Esophagus muscularis mucosa (tissue), 4 donors: ENCODE measurements at regions of chr19 and their contacts with region 1.

Region 1: DNA sequence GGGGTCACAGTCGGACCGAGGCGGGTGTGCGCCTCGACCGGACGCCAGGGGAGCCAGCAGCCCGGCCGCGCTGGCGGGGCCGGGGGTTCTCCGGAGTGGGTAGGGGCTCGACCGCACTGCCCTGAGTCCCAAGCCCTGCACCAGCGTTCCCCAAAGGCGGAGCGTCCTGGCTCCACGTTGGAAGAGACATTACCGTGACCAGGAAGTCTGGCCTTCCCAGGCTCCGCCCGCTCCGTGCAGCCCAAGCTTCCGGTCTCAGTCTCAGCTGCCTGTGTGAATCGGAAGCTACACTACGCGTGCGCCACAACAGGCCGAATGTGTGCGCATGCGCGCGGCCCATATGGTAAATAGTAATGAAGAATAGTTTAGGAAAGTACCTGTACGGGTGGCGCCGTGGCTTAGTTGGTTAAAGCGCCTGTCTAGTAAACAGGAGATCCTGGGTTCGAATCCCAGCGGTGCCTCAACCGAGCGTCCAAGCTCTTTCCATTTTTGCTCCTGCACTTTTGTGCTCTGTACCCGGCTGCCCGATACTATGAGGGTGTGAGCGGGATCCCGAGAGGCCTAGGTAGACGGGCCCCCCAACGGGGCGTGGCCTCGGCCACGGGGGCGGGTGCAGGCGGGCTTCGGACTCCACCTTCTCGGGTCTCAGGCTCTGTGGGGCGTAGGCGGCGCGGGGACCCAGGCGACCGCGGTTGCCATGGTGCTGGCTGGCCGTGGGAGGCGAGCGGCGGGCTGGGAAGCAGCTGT is 17.3 kb upstream of the LRP3 start:
- DNase-seq: peak; percentile 100
- H3K4me3 ChIP-seq: peak overlapping the region; percentile 70 to 96 (median 82)
- H3K27ac ChIP-seq: peak overlapping the region; percentile 88 to 96 (median 92)
- H3K4me1 ChIP-seq: peaks cover 24 to 46% (median 32%) of the 10 kb centered on the region in 4 donors
- H3K27me3 ChIP-seq: no peaks in the 10 kb centered on the region
- CTCF ChIP-seq: peak in 2 of 3 experiments; percentile 4 to 44
- EP300 ChIP-seq: no peak
- POLR2A ChIP-seq: peak; percentile 29

Region 2: DNA sequence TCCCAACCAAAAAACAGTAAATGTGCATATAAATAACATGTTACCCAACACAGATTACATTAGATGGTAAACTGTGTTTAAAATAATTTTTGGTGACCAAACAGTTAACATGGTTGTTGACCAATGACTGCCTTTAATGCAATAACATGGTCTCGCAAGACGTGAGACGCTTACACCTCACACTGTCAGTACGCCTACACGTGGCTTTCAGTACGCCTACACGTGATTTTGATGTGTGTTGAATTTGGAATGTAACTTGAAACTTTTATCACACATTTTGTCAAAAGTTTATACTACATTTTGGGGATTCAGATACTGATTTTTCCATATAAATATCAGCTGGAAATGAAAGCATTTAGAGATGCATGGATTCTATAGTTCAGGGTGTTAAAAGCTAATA is 339.3 kb before region 1 on chr19:
- intact Hi-C with region 1: no loop called
- DNase-seq: no peak
- H3K4me3 ChIP-seq: no peak overlapping the region
- H3K27ac ChIP-seq: no peak overlapping the region
- H3K4me1 ChIP-seq: peaks cover 0 to 6% (median 2%) of the 10 kb centered on the region in 4 donors
- H3K27me3 ChIP-seq: no peaks in the 10 kb centered on the region
- CTCF ChIP-seq: no peak
- EP300 ChIP-seq: no peak
- POLR2A ChIP-seq: no peak

Region 3: GRCh38 chr19:33143897-33144405 is 32.9 kb before region 1 on chr19:
- intact Hi-C with region 1: loop called (anchors 5 kb)
- DNase-seq: no peak
- H3K4me3 ChIP-seq: no peak overlapping the region
- H3K27ac ChIP-seq: no peak overlapping the region
- H3K4me1 ChIP-seq: peaks cover 0 to 8% (median 6%) of the 10 kb centered on the region in 4 donors
- H3K27me3 ChIP-seq: peaks cover 0 to 15% (median 0%) of the 10 kb centered on the region in 4 donors
- CTCF ChIP-seq: peak in 2 of 3 experiments; percentile 91 to 92
- EP300 ChIP-seq: no peak
- POLR2A ChIP-seq: no peak

Region 4: GRCh38 chr19:33373701-33374421 is 197.0 kb after region 1 on chr19 and contains the start of gene CEBPG:
- intact Hi-C with region 1: loop called (anchors 5 kb)
- DNase-seq: no peak
- H3K4me3 ChIP-seq: peak within 1 kb of the TSS; percentile 88 to 95 (median 88)
- H3K27ac ChIP-seq: peak within 1 kb of the TSS; percentile 97 to 99 (median 99)
- H3K4me1 ChIP-seq: peaks cover 25 to 51% (median 46%) of the 10 kb centered on the region in 4 donors
- H3K27me3 ChIP-seq: no peaks in the 10 kb centered on the region
- CTCF ChIP-seq: peak; percentile 7 to 36 (median 27)
- EP300 ChIP-seq: no peak
- POLR2A ChIP-seq: peak; percentile 87
- total RNA-seq, gene CEBPG: 23.1 to 30.3 (median 28.5) TPM